IMR-90 (cell line): ENCODE measurements at regions of chrX and their contacts with region 1.

Region 1: GRCh38 chrX:14095702-14096101 is 66.0 kb upstream of the GEMIN8 start:
- DNase-seq: peak; percentile 53
- ATAC-seq: peak; percentile 90
- H3K4me3 ChIP-seq: no peak overlapping the region
- H3K27ac ChIP-seq: no peak overlapping the region
- H3K4me1 ChIP-seq: no peaks in the 10 kb centered on the region
- H3K27me3 ChIP-seq: no peaks in the 10 kb centered on the region
- CTCF ChIP-seq: peak; percentile 74
- POLR2A ChIP-seq: no peak
- RAD21 ChIP-seq: peak; percentile 86

Region 2: GRCh38 chrX:13816643-13817627 is 278.8 kb before region 1 on chrX and contains the start of gene GPM6B:
- CTCF ChIA-PET with region 1: no interaction called
- POLR2A ChIA-PET with region 1: no interaction called
- dilution Hi-C with region 1: no loop called
- in situ Hi-C with region 1: no loop called
- intact Hi-C with region 1: no loop called
- DNase-seq: no peak
- ATAC-seq: no peak
- H3K4me3 ChIP-seq: no peak within 1 kb of the TSS
- H3K27ac ChIP-seq: no peak within 1 kb of the TSS
- H3K4me1 ChIP-seq: no peaks in the 10 kb centered on the region
- H3K27me3 ChIP-seq: peaks cover 11% of the 10 kb centered on the region
- CTCF ChIP-seq: no peak
- POLR2A ChIP-seq: no peak
- RAD21 ChIP-seq: no peak
- total RNA-seq, gene GPM6B: 4.2 and 5.9 TPM in 2 replicates

Region 3: DNA sequence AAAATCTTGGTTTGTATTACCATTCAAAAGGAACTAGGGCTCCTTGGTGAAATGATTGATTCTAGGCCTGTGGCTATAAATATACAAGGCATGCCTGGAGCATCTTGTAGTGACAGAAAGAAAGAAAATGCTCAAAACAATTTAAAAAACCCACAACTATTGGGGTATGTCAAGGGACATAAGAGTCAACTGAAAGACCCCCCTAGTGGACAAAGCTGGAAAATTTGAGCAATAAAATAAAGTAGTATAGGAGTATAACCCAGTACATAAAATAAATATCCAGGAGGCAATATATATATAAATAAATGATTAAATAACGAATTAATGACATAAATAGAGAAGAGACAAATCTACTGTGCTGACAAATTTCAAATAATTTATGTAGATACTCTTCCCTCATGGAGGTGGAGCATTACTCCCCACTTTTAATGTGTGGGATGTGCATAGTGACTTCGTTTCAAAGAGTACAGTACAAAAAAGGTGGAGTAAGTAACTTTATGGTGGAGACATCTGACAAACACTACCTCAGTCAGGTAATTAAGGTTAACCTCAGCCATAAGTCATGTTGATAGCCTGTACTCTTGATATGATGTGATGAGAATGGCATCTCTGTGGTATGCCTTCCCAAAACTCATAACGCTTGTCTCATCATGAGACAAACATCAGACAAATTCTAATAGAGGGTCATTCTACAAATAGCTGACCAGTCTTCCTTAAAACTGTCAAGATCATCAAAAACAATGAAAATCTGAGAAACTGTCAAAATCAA is 248.7 kb after region 1 on chrX:
- CTCF ChIA-PET with region 1: no interaction called
- POLR2A ChIA-PET with region 1: no interaction called
- dilution Hi-C with region 1: no loop called
- in situ Hi-C with region 1: no loop called
- intact Hi-C with region 1: no loop called
- DNase-seq: no peak
- ATAC-seq: no peak
- H3K4me3 ChIP-seq: no peak overlapping the region
- H3K27ac ChIP-seq: no peak overlapping the region
- H3K4me1 ChIP-seq: no peaks in the 10 kb centered on the region
- H3K27me3 ChIP-seq: no peaks in the 10 kb centered on the region
- CTCF ChIP-seq: no peak
- POLR2A ChIP-seq: no peak
- RAD21 ChIP-seq: no peak

Region 4: GRCh38 chrX:14630733-14631132 is 535.0 kb after region 1 on chrX:
- CTCF ChIA-PET with region 1: no interaction called
- POLR2A ChIA-PET with region 1: no interaction called
- dilution Hi-C with region 1: no loop called
- in situ Hi-C with region 1: no loop called
- intact Hi-C with region 1: loop called (anchors 5 kb)
- DNase-seq: no peak
- ATAC-seq: no peak
- H3K4me3 ChIP-seq: no peak overlapping the region
- H3K27ac ChIP-seq: no peak overlapping the region
- H3K4me1 ChIP-seq: no peaks in the 10 kb centered on the region
- H3K27me3 ChIP-seq: no peaks in the 10 kb centered on the region
- CTCF ChIP-seq: no peak
- POLR2A ChIP-seq: no peak
- RAD21 ChIP-seq: no peak

Region 5: DNA sequence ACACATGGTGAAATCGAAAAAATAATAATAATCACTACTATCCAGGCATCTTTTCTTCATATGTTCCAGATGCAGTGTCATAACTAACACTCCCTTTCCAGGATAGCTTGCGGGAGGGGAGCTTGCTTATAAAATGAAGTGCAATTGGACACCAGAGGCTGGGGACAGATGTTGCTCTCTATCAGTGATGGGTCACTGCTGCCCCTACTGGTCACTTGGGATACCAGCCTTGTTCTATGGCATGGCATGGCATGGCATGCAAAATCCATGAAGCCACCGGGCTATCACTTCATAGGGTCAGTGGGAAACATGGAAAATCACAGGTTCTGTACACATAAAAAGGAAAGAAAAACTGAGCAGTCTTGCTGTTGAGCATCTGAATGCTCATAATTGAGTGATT is 601.7 kb after region 1 on chrX:
- CTCF ChIA-PET with region 1: no interaction called
- POLR2A ChIA-PET with region 1: no interaction called
- dilution Hi-C with region 1: no loop called
- in situ Hi-C with region 1: no loop called
- intact Hi-C with region 1: loop called (anchors 10 kb)
- DNase-seq: no peak
- ATAC-seq: peak; percentile 46; the same call in 1 of the 2 replicates
- H3K4me3 ChIP-seq: no peak overlapping the region
- H3K27ac ChIP-seq: no peak overlapping the region
- H3K4me1 ChIP-seq: no peaks in the 10 kb centered on the region
- H3K27me3 ChIP-seq: no peaks in the 10 kb centered on the region
- CTCF ChIP-seq: peak; percentile 33; the same call in 1 of the 2 replicates
- POLR2A ChIP-seq: no peak
- RAD21 ChIP-seq: peak; percentile 29; the same call in 1 of the 2 replicates

Region 6: DNA sequence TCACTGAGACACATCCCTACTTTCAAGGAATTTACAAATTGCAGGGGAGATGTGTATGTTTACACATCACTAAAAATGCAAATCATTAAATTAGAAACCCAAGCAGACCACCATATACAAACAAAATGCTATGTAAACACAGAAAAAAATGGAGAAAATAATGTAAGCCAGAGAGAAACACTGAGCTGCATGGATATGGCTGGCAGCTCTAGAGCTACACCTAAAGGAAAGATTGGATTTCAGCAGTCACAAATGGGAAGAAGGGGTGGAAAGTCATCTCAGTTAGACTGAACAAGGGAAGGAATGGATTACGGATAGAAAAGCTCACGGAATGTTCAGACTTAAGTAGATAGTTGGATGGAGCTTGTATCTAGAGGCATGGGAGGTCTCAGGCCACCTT is 963.8 kb after region 1 on chrX:
- CTCF ChIA-PET with region 1: no interaction called
- POLR2A ChIA-PET with region 1: no interaction called
- dilution Hi-C with region 1: no loop called
- in situ Hi-C with region 1: no loop called
- intact Hi-C with region 1: loop called (anchors 2 kb)
- DNase-seq: no peak
- ATAC-seq: peak; percentile 54
- H3K4me3 ChIP-seq: no peak overlapping the region
- H3K27ac ChIP-seq: no peak overlapping the region
- H3K4me1 ChIP-seq: peaks cover 2% of the 10 kb centered on the region; the same call in 1 of the 2 replicates
- H3K27me3 ChIP-seq: no peaks in the 10 kb centered on the region; the same call in 1 of the 2 replicates
- CTCF ChIP-seq: peak; percentile 35
- POLR2A ChIP-seq: no peak
- RAD21 ChIP-seq: peak; percentile 45

Region 7: DNA sequence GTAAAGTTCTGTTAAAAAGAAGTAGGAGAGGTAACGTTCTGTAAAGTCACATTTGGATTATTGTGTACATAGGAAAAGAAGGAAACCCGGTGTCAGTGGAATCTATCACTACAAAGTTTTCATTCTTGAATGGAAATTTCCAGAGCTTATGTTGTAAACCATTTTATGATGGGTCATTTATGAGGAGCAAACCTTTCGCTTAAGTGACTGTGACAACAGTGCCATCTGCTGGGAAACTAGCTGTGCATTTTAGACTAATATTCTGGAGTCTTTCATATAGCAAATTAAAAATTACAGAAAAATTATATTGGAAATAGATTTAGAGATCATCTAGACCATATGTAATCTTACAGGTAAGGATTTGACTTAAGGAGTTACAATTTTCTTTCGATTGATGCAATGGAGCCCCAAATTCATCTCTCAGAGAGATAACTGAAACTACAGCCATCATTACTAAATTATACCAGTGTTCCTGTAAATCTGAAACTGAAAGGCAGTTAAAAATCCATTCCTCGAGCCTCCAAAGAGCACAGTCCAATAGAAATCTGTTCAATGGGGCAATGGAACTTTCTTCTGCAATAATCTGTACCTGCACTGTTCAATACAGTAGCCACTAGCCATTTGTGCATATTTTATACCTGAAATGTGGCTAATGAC is 1147.3 kb after region 1 on chrX:
- CTCF ChIA-PET with region 1: no interaction called
- POLR2A ChIA-PET with region 1: no interaction called
- dilution Hi-C with region 1: no loop called
- in situ Hi-C with region 1: no loop called
- intact Hi-C with region 1: loop called (anchors 1 kb)
- DNase-seq: peak; percentile 59
- ATAC-seq: peak; percentile 62; the same call in 1 of the 2 replicates
- H3K4me3 ChIP-seq: no peak overlapping the region
- H3K27ac ChIP-seq: no peak overlapping the region
- H3K4me1 ChIP-seq: no peaks in the 10 kb centered on the region
- H3K27me3 ChIP-seq: peaks cover 2% of the 10 kb centered on the region
- CTCF ChIP-seq: peak; percentile 62
- POLR2A ChIP-seq: no peak
- RAD21 ChIP-seq: peak; percentile 62